Gastrocnemius medialis (tissue), 4 donors: ENCODE measurements at regions of chr9 and their contacts with region 1.

Region 1: GRCh38 chr9:24308010-24308409 is 237.7 kb downstream of the IZUMO3 start:
- DNase-seq: no peak
- ATAC-seq: no peak
- H3K4me3 ChIP-seq: no peak overlapping the region
- H3K27ac ChIP-seq: no peak overlapping the region
- H3K4me1 ChIP-seq: no peaks in the 10 kb centered on the region
- H3K27me3 ChIP-seq: no peaks in the 10 kb centered on the region
- CTCF ChIP-seq: no peak
- POLR2A ChIP-seq: no peak

Region 2: GRCh38 chr9:24218656-24219055 is 89.4 kb before region 1 on chr9:
- in situ Hi-C with region 1: loop called in 1 of 4 experiments (anchors 25 kb)
- intact Hi-C with region 1: no loop called
- DNase-seq: no peak
- ATAC-seq: no peak
- H3K4me3 ChIP-seq: no peak overlapping the region
- H3K27ac ChIP-seq: no peak overlapping the region
- H3K4me1 ChIP-seq: no peaks in the 10 kb centered on the region
- H3K27me3 ChIP-seq: no peaks in the 10 kb centered on the region
- CTCF ChIP-seq: no peak
- POLR2A ChIP-seq: no peak

Region 3: GRCh38 chr9:24333629-24334028 is 25.6 kb after region 1 on chr9:
- in situ Hi-C with region 1: no loop called
- intact Hi-C with region 1: no loop called
- DNase-seq: no peak
- ATAC-seq: no peak
- H3K4me3 ChIP-seq: no peak overlapping the region
- H3K27ac ChIP-seq: no peak overlapping the region
- H3K4me1 ChIP-seq: no peaks in the 10 kb centered on the region
- H3K27me3 ChIP-seq: no peaks in the 10 kb centered on the region
- CTCF ChIP-seq: no peak
- POLR2A ChIP-seq: no peak